ENCODE measurements at regions of chr14 and their contacts with region 1.

Region 1: GRCh38 chr14:23057757-23058653 is 685 bp upstream of the CDH24 start:
- DNase-seq: peak; percentile 91
- ATAC-seq: peak; percentile 76
- H3K4me3 Mint-ChIP-seq: peak overlapping the region; percentile 83
- H3K27ac Mint-ChIP-seq: peak overlapping the region; percentile 34
- H3K4me1 Mint-ChIP-seq: peaks cover 18% of the 10 kb centered on the region
- H3K27me3 Mint-ChIP-seq: peaks cover 9% of the 10 kb centered on the region

Region 2: GRCh38 chr14:22955702-22956569 is 102.1 kb before region 1 on chr14:
- CTCF ChIA-PET with region 1: interaction called, 10 read pairs
- POLR2A ChIA-PET with region 1: no interaction called
- DNase-seq: no peak
- ATAC-seq: no peak
- H3K4me3 Mint-ChIP-seq: peak overlapping the region; percentile 95
- H3K27ac Mint-ChIP-seq: peak overlapping the region; percentile 92
- H3K4me1 Mint-ChIP-seq: peaks cover 29% of the 10 kb centered on the region
- H3K27me3 Mint-ChIP-seq: no peaks in the 10 kb centered on the region

Region 3: GRCh38 chr14:22973217-22974032 is 84.6 kb before region 1 on chr14:
- CTCF ChIA-PET with region 1: interaction called, 54 read pairs
- POLR2A ChIA-PET with region 1: interaction called, 3 read pairs
- DNase-seq: peak; percentile 55
- ATAC-seq: no peak
- H3K4me3 Mint-ChIP-seq: no peak overlapping the region
- H3K27ac Mint-ChIP-seq: no peak overlapping the region
- H3K4me1 Mint-ChIP-seq: no peaks in the 10 kb centered on the region
- H3K27me3 Mint-ChIP-seq: peaks cover 7% of the 10 kb centered on the region

Region 4: DNA sequence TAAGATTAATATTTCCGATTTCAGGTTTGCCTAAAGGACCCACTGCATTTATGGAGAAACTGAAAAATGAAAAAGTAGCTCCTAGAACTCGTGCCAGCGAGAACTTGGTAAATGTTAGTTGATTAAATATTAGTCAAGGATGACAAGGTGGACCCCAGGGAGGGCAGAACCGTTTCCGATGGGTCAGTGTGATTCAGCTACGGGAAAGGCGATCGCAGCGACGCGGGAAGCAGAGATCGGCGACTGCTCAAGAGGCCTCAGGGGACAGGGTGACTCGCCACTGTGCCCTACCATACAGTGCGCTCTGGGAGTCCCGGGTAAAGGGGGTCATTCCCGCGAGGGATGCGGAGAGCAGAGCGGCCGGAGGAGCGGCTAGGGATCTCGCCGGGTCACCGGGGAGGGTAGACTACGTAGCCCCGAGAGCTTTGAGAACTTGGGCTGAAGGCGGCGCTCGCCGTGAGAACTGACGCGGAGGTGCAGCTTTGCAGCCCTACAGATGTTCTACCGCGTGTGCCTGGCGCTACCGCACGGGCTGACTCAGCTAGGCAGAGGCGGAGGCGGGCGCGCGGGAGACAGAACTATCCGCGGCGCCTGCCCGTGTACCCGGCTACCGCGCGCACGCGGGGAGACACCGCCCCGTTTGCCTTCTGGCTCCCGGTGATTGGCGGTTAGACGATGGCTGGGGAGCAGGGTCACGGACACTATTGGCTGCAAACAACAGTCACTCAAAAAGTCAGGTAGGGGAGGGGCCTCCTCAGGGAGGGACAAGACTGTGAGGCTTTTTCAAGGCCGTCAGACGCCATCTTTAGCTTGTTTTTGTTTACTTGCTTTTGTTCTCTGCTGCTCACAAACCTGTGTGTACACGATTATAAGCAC is 51.2 kb before region 1 on chr14:
- CTCF ChIA-PET with region 1: interaction called, 97 read pairs
- POLR2A ChIA-PET with region 1: interaction called, 10 read pairs
- DNase-seq: peak; percentile 98
- ATAC-seq: peak; percentile 99
- H3K4me3 Mint-ChIP-seq: peak overlapping the region; percentile 94
- H3K27ac Mint-ChIP-seq: peak overlapping the region; percentile 98
- H3K4me1 Mint-ChIP-seq: peaks cover 51% of the 10 kb centered on the region
- H3K27me3 Mint-ChIP-seq: no peaks in the 10 kb centered on the region

Region 5: DNA sequence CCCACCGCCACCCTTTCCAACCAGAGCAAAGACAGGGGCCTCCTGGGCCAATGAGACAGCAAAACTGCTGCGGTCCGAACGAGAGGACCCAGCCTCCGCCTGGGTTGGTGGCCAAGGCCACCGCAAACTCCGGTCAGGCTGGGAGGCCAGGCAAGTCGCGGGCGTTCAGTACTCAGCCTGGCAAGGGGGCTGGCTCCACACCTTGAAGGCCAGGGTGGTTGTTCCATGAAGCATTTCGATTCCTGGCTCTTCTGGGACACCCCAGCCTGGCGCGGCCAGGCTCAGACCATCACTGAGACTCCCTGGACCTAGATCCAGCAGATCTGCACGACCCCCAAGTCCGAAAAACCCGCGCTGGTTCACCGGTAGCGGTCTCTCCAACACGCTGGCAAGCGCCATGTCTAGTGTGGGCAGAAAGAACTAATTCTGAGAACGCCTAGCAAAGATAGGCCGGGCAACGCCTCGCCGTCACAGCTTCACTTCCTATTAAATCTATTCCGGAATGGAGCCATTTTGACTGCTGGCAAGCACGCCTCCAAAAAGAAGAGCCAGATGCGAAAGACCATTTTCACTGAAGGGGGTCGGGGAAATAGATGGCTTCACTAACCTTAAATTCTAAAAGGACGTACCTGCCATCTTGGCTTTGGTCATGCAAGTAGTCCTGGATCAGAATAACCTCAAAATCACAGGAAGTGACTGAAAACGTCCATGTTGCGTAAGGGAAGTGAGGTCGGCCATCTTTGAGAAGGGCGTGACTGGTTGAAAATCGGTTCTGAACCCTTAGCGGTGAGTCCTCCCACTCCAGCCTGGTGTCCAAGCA is 23.3 kb before region 1 on chr14 and contains the start of gene PSMB5:
- CTCF ChIA-PET with region 1: interaction called, 16 read pairs
- POLR2A ChIA-PET with region 1: no interaction called
- DNase-seq: peak; percentile 95
- ATAC-seq: peak; percentile 97
- H3K4me3 Mint-ChIP-seq: peak within 1 kb of the TSS; percentile 91
- H3K27ac Mint-ChIP-seq: peak within 1 kb of the TSS; percentile 96
- H3K4me1 Mint-ChIP-seq: peaks cover 30% of the 10 kb centered on the region
- H3K27me3 Mint-ChIP-seq: no peaks in the 10 kb centered on the region
- total RNA-seq, gene PSMB5: 64.5 to 74.5 TPM

Region 6: GRCh38 chr14:23095196-23096108 is 37.4 kb after region 1 on chr14 and contains the start of gene C14orf119:
- CTCF ChIA-PET with region 1: interaction called, 16 read pairs
- POLR2A ChIA-PET with region 1: interaction called, 6 read pairs
- DNase-seq: peak; percentile 100
- ATAC-seq: peak; percentile 94
- H3K4me3 Mint-ChIP-seq: no peak within 1 kb of the TSS
- H3K27ac Mint-ChIP-seq: no peak within 1 kb of the TSS
- H3K4me1 Mint-ChIP-seq: peaks cover 33% of the 10 kb centered on the region
- H3K27me3 Mint-ChIP-seq: no peaks in the 10 kb centered on the region
- total RNA-seq, gene C14orf119: 46.0 to 47.0 TPM

Region 7: DNA sequence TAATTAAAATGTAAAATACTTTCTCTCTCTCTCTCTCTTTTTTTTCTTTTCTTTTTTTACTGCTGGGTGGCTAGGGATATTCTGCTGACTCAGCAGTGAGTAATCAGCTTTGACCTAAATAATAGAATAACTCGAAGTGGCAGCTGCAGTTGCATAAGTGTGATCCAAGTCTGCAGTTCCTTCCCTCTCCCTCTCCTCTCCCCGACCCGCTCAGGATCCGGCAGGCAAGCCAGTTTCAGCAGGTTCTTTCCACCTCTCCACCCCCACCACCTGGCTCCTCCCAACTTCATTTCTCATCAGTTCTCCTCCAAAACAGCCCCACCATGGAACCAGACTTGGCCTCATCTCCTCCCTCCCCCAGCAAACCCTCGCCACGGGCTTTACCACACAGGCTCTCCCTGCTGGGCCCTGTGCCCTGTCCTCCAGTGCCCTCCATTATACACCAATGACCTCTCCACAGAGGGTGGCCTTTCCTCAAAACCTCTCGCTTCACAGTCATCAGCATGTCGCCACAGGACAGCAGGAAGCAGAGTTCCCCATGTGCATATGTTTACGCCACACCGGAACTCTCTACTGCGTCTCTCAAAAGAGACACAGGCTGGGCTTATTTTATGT is 103.0 kb after region 1 on chr14:
- CTCF ChIA-PET with region 1: no interaction called
- POLR2A ChIA-PET with region 1: no interaction called
- DNase-seq: no peak
- ATAC-seq: no peak
- H3K4me3 Mint-ChIP-seq: no peak overlapping the region
- H3K27ac Mint-ChIP-seq: no peak overlapping the region
- H3K4me1 Mint-ChIP-seq: peaks cover 11% of the 10 kb centered on the region
- H3K27me3 Mint-ChIP-seq: peaks cover 3% of the 10 kb centered on the region

Region 8: GRCh38 chr14:23258256-23258655 is 200.3 kb after region 1 on chr14:
- CTCF ChIA-PET with region 1: no interaction called
- POLR2A ChIA-PET with region 1: no interaction called
- DNase-seq: no peak
- ATAC-seq: no peak
- H3K4me3 Mint-ChIP-seq: no peak overlapping the region
- H3K27ac Mint-ChIP-seq: no peak overlapping the region
- H3K4me1 Mint-ChIP-seq: no peaks in the 10 kb centered on the region
- H3K27me3 Mint-ChIP-seq: peaks cover 38% of the 10 kb centered on the region